ENCODE measurements at regions of chr5 and their contacts with region 1.

Region 1: DNA sequence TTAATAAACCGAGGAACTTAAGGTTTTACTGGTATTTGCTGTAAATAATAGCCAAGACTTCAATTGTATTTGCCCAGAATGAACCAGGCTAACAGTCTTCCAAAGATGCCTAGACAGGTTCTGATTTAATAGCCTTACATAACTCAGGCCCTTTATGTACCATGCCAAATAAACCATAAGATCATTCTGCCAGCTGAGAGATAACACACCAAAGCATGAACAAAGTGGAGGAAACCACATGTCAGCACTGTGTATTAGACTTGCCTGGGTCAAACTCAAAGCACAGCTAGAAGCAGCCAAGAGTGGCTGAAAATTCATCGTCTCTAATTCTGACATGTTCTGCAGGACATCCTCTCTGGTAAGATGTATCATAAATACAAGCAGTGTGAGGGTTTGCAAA is 319.3 kb upstream of the ZNF608 start:
- DNase-seq: no peak
- H3K4me3 ChIP-seq: no peak overlapping the region
- H3K27ac ChIP-seq: no peak overlapping the region
- H3K4me1 ChIP-seq: no peaks in the 10 kb centered on the region
- H3K27me3 ChIP-seq: no peaks in the 10 kb centered on the region
- CTCF ChIP-seq: no peak
- POLR2A ChIP-seq: no peak

Region 2: GRCh38 chr5:125052584-125052983 is 13.2 kb before region 1 on chr5:
- intact Hi-C with region 1: loop called (anchors 1 kb)
- DNase-seq: no peak
- H3K4me3 ChIP-seq: no peak overlapping the region
- H3K27ac ChIP-seq: no peak overlapping the region
- H3K4me1 ChIP-seq: no peaks in the 10 kb centered on the region
- H3K27me3 ChIP-seq: no peaks in the 10 kb centered on the region
- CTCF ChIP-seq: no peak
- POLR2A ChIP-seq: no peak